ENCODE measurements at regions of chr19 and their contacts with region 1.

Region 1: GRCh38 chr19:55467236-55468053 is 2.9 kb upstream of the C19orf85 start:
- DNase-seq: peak; percentile 86
- ATAC-seq: peak; percentile 87

Region 2: DNA sequence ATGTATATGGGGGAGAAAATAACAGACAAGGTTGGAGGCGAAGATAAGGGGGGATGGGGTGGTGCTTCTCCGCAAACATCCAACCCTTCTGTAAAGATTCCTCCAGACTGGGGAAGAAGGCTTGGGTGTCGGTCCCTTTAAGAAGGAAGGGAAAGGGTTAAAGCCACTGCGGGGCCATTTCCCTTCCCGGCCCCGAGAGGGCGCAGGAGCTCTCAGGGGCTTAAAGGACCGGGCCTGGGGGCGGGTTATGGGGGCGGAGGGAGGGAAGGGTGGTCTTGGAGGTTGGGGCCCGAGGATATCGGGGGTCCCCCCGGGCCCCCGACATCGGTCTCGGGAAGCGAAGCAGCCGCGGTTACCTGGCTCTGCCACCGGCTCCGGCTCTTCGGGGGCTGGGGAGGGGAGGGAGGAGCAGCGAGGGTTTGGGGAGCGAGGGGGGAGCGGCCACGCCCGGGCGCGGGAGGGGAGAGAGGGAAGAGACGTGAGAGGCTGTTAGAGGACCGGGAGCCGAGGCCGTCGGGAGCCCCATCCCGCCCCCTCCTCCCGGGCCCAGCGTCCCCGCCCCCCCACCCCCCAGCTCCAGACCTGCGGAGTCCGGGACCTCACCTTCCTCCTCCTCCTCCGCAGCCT is 321.3 kb before region 1 on chr19:
- intact Hi-C with region 1: no loop called
- DNase-seq: no peak
- ATAC-seq: no peak

Region 3: GRCh38 chr19:55503502-55504251 is 36.2 kb after region 1 on chr19:
- intact Hi-C with region 1: loop called (anchors 2 kb)
- DNase-seq: peak; percentile 97
- ATAC-seq: peak; percentile 98

Measured in left ventricle myocardium superior (tissue), 1 donor.